Activated CD4-positive, alpha-beta memory T cell treated with anti-CD3 and anti-CD28 coated beads for 36 hours (primary cell): ENCODE measurements at regions of chr6 and their contacts with region 1.

Region 1: DNA sequence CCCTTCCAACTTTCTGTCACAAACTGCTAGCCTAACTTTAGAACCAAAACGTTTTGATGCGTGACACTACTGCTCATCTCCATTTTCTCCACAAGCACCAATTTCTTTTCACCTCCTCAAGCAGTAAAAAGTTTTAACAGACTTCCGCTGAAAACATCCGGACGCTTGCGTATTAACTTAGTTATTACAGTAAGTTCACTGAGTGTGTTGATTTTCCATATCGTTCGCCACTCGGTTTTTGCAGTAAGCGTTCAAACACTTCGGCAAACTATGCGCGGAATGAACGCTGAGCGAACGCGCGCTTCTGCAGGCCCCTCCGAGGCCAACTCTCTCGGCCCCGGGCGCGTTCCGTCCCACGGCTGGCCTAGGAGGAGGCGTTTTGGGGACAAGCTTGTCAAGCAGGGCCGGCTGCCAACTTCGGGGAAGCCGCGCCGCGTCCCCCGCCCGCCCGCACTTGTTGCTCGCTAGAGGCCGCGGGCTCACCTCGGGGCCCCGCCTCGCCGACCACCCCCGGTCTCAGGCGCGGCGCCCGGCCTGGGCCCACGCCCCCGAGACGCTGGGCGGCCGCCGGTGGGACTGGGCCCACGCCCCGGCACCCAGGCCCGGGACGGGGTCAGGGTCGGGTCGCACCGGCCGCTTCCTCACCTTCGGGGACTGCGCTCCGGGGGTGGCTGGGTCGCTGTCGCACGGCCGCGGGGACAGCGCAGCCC is 945 bp downstream of the PHF10 start:
- DNase-seq: peak; percentile 76
- H3K4me3 Mint-ChIP-seq: peak overlapping the region; percentile 98
- H3K27ac Mint-ChIP-seq: peak overlapping the region; percentile 100
- H3K4me1 Mint-ChIP-seq: peaks cover 42% of the 10 kb centered on the region
- H3K27me3 Mint-ChIP-seq: no peaks in the 10 kb centered on the region

Region 2: GRCh38 chr6:169212897-169213813 is 510.2 kb before region 1 on chr6:
- CTCF ChIA-PET with region 1: no interaction called
- POLR2A ChIA-PET with region 1: no interaction called
- intact Hi-C with region 1: loop called (anchors 10 kb)
- DNase-seq: peak; percentile 93
- H3K4me3 Mint-ChIP-seq: peak overlapping the region; percentile 51
- H3K27ac Mint-ChIP-seq: peak overlapping the region; percentile 55
- H3K4me1 Mint-ChIP-seq: peaks cover 9% of the 10 kb centered on the region
- H3K27me3 Mint-ChIP-seq: no peaks in the 10 kb centered on the region

Region 3: GRCh38 chr6:169709293-169709692 is 14.1 kb before region 1 on chr6:
- CTCF ChIA-PET with region 1: interaction called, 4 read pairs
- POLR2A ChIA-PET with region 1: interaction called, 3 read pairs
- intact Hi-C with region 1: loop called (anchors 1 kb)
- DNase-seq: no peak
- H3K4me3 Mint-ChIP-seq: no peak overlapping the region
- H3K27ac Mint-ChIP-seq: peak overlapping the region; percentile 49
- H3K4me1 Mint-ChIP-seq: peaks cover 38% of the 10 kb centered on the region
- H3K27me3 Mint-ChIP-seq: no peaks in the 10 kb centered on the region

Region 4: GRCh38 chr6:169751242-169752073 is 28.1 kb after region 1 on chr6 and contains the starts of genes DYNLT2 and ERMARD:
- CTCF ChIA-PET with region 1: no interaction called
- POLR2A ChIA-PET with region 1: interaction called, 10 read pairs
- intact Hi-C with region 1: loop called (anchors 1 kb)
- DNase-seq: peak; percentile 96
- H3K4me3 Mint-ChIP-seq: peak within 1 kb of the TSS; percentile 95
- H3K27ac Mint-ChIP-seq: peak within 1 kb of the TSS; percentile 98
- H3K4me1 Mint-ChIP-seq: peaks cover 29% of the 10 kb centered on the region
- H3K27me3 Mint-ChIP-seq: no peaks in the 10 kb centered on the region
- total RNA-seq, gene DYNLT2: 2.0 to 2.1 TPM
- total RNA-seq, gene ERMARD: 23.9 to 24.6 TPM

Region 5: GRCh38 chr6:169990095-169991030 is 267.0 kb after region 1 on chr6:
- CTCF ChIA-PET with region 1: no interaction called
- POLR2A ChIA-PET with region 1: no interaction called
- intact Hi-C with region 1: no loop called
- DNase-seq: peak; percentile 86
- H3K4me3 Mint-ChIP-seq: peak overlapping the region; percentile 52
- H3K27ac Mint-ChIP-seq: peak overlapping the region; percentile 75
- H3K4me1 Mint-ChIP-seq: peaks cover 25% of the 10 kb centered on the region
- H3K27me3 Mint-ChIP-seq: no peaks in the 10 kb centered on the region